CD4-positive, alpha-beta memory T cell (primary cell): ENCODE measurements at regions of chr2 and their contacts with region 1.

Region 1: GRCh38 chr2:136378712-136379595 is 261.0 kb upstream of the CXCR4 start:
- DNase-seq: peak; percentile 71 to 78 (median 74)
- H3K4me3 ChIP-seq: no peak overlapping the region
- H3K4me3 Mint-ChIP-seq: no peak overlapping the region
- H3K27ac ChIP-seq: no peak overlapping the region
- H3K27ac Mint-ChIP-seq: peak overlapping the region in 6 of 7 donors; percentile 70 to 89 (median 78)
- H3K4me1 ChIP-seq: peaks cover 55% of the 10 kb centered on the region
- H3K4me1 Mint-ChIP-seq: peaks cover 49 to 79% (median 53%) of the 10 kb centered on the region in 4 donors
- H3K27me3 ChIP-seq: no peaks in the 10 kb centered on the region
- H3K27me3 Mint-ChIP-seq: no peaks in the 10 kb centered on the region

Region 2: GRCh38 chr2:135913727-135914365 is 465.1 kb before region 1 on chr2:
- CTCF ChIA-PET with region 1: interaction called, 487 read pairs
- POLR2A ChIA-PET with region 1: interaction called, 44 read pairs
- intact Hi-C with region 1: loop called (anchors 1 kb)
- DNase-seq: peak; percentile 48 to 61 (median 58)
- H3K4me3 ChIP-seq: no peak overlapping the region
- H3K4me3 Mint-ChIP-seq: no peak overlapping the region
- H3K27ac ChIP-seq: no peak overlapping the region
- H3K27ac Mint-ChIP-seq: peak overlapping the region; percentile 34 to 90 (median 81)
- H3K4me1 ChIP-seq: no peaks in the 10 kb centered on the region
- H3K4me1 Mint-ChIP-seq: peaks cover 0 to 8% (median 3%) of the 10 kb centered on the region in 4 donors
- H3K27me3 ChIP-seq: no peaks in the 10 kb centered on the region
- H3K27me3 Mint-ChIP-seq: no peaks in the 10 kb centered on the region

Region 3: DNA sequence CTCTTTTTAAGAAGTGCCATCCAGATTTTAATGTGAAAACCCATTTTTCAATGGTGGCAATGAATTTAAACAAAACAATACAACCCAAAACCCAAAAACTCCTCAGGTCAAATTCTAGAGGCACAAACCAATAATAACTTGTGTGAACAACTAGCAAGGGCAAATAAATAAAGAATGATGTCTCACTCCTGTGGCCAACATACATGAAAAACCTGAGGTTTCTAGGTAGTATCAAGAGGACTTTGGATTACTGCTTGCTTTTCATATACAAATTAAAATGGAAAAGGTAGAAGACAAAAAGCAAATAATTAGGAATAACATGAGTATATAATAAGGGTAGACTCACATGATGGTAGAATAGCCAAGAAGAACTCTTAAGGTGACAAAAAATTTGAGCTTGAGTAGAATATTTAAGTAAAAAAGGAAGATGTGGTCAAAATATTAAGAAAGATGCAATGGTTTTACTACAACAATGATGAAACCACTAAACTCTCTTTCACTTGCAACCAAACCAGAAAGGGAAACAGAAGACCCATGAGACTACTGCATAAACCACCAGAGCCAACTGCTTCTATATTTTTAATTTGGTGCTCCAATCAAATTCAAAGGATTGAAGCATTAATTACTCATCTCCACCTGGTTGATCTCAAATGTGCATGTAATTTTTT is 447.0 kb before region 1 on chr2:
- CTCF ChIA-PET with region 1: interaction called, 12 read pairs
- POLR2A ChIA-PET with region 1: no interaction called
- intact Hi-C with region 1: no loop called
- DNase-seq: no peak
- H3K4me3 ChIP-seq: no peak overlapping the region
- H3K4me3 Mint-ChIP-seq: no peak overlapping the region
- H3K27ac ChIP-seq: no peak overlapping the region
- H3K27ac Mint-ChIP-seq: peak overlapping the region in 1 of 7 donors; percentile 46
- H3K4me1 ChIP-seq: no peaks in the 10 kb centered on the region
- H3K4me1 Mint-ChIP-seq: peaks cover 4 to 10% (median 8%) of the 10 kb centered on the region in 4 donors
- H3K27me3 ChIP-seq: no peaks in the 10 kb centered on the region
- H3K27me3 Mint-ChIP-seq: no peaks in the 10 kb centered on the region

Region 4: GRCh38 chr2:136171221-136171620 is 207.7 kb before region 1 on chr2:
- CTCF ChIA-PET with region 1: no interaction called
- POLR2A ChIA-PET with region 1: no interaction called
- intact Hi-C with region 1: no loop called
- DNase-seq: no peak
- H3K4me3 ChIP-seq: no peak overlapping the region
- H3K4me3 Mint-ChIP-seq: peak overlapping the region in 1 of 8 donors; percentile 11
- H3K27ac ChIP-seq: no peak overlapping the region
- H3K27ac Mint-ChIP-seq: peak overlapping the region in 4 of 7 donors; percentile 14 to 55 (median 41)
- H3K4me1 ChIP-seq: peaks cover 5% of the 10 kb centered on the region
- H3K4me1 Mint-ChIP-seq: peaks cover 8 to 27% (median 9%) of the 10 kb centered on the region in 4 donors
- H3K27me3 ChIP-seq: no peaks in the 10 kb centered on the region
- H3K27me3 Mint-ChIP-seq: no peaks in the 10 kb centered on the region

Region 5: DNA sequence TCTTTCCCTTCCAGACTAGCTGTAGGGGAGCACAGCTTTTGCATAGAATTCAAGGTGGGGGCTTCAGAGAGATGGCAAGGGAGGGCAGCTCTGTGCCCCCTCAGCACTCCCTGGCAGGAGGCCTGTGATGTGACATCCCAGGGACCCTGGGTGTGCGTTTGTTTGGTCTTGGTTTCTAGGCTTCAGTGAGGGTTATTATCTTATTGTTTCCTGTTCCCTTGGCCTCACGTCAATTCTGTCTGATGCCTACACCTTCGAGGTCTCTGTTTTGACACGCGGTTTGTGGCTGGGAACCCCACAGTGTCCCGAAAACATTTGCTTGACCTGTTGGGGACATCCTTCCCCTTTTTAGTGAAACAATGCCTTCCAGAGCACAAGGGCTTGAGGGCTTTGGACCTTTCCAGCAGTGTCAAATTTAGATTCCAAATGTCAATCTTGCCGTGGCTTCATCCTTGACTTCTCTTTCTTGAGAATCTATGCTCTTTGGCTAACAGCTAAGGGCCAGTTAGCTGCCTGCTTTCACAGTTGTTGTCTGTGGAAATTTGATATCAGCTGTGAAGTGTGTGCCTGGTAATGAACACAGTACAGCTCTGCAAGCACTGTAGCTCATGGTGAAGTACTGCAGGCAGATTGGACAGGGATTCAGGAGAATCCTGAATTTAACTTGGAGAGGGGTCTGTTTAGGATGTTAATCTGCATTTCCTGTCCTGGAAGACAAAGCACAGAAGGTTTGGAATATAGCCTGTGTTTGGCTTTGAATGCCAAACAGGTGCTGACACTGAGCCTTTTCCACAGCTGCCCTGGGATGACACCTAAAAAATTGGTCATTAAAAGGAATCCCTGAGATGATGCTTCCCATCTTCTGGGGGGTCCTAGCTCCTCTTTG is 152.8 kb before region 1 on chr2:
- CTCF ChIA-PET with region 1: no interaction called
- POLR2A ChIA-PET with region 1: no interaction called
- intact Hi-C with region 1: no loop called
- DNase-seq: peak; percentile 43 to 67 (median 47)
- H3K4me3 ChIP-seq: no peak overlapping the region
- H3K4me3 Mint-ChIP-seq: no peak overlapping the region
- H3K27ac ChIP-seq: no peak overlapping the region
- H3K27ac Mint-ChIP-seq: peak overlapping the region; percentile 24 to 91 (median 83)
- H3K4me1 ChIP-seq: peaks cover 15% of the 10 kb centered on the region
- H3K4me1 Mint-ChIP-seq: peaks cover 10 to 14% (median 12%) of the 10 kb centered on the region in 4 donors
- H3K27me3 ChIP-seq: no peaks in the 10 kb centered on the region
- H3K27me3 Mint-ChIP-seq: no peaks in the 10 kb centered on the region

Region 6: GRCh38 chr2:136255648-136256463 is 123.1 kb before region 1 on chr2:
- CTCF ChIA-PET with region 1: interaction called, 11 read pairs
- POLR2A ChIA-PET with region 1: no interaction called
- intact Hi-C with region 1: loop called (anchors 1 kb)
- DNase-seq: peak in 2 of 5 donors; percentile 16 to 21
- H3K4me3 ChIP-seq: no peak overlapping the region
- H3K4me3 Mint-ChIP-seq: no peak overlapping the region
- H3K27ac ChIP-seq: no peak overlapping the region
- H3K27ac Mint-ChIP-seq: peak overlapping the region in 5 of 7 donors; percentile 26 to 75 (median 38)
- H3K4me1 ChIP-seq: peaks cover 5% of the 10 kb centered on the region
- H3K4me1 Mint-ChIP-seq: peaks cover 7 to 28% (median 11%) of the 10 kb centered on the region in 4 donors
- H3K27me3 ChIP-seq: no peaks in the 10 kb centered on the region
- H3K27me3 Mint-ChIP-seq: no peaks in the 10 kb centered on the region